ENCODE measurements at regions of chr12 and their contacts with region 1.

Region 1: DNA sequence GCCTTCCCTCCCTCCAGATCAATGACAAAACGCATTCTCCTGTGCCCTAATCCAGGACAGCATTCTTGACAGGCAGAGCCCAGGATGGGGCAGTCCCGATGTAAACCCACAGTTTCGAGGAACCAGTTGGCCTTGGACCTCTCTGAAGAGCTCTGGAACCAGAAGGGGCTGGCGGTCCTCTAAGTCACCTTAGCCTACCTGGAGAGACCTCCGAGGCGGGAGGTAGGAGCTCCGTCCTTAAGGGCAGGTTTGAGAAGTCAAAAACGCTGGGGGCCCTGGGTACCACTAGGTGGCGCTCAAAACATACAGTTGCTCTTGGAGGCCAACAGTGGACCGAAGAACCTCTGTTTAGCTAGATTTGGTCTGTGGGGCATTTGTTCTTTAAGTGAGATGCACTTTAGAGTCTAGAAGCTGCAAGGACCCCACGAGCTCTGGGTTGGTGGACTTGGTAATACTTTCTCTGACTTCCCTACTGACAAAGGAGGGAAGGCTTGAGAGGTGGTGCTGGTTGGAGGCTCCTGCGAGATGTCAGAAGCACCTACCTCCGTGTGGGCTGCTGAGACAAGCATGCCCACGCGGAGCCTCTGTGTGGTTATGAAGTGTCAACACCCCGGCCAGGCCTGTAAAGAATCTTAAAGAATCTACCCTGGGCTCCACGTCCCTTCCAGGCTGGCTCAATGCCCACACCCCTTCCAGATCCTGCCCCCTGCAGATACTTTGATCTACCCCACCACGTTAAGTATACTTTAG is 74.8 kb upstream of the CHST11 start:
- DNase-seq: peak; percentile 82
- H3K4me3 ChIP-seq: no peak overlapping the region
- H3K27ac ChIP-seq: no peak overlapping the region
- H3K4me1 ChIP-seq: peaks cover 0 to 7% (median 3%) of the 10 kb centered on the region in 4 donors
- H3K27me3 ChIP-seq: no peaks in the 10 kb centered on the region
- CTCF ChIP-seq: peak; percentile 88 to 97 (median 95)
- EP300 ChIP-seq: no peak
- POLR2A ChIP-seq: no peak

Region 2: GRCh38 chr12:104303538-104304151 is 78.3 kb before region 1 on chr12 and contains the start of gene EID3:
- in situ Hi-C with region 1: no loop called
- intact Hi-C with region 1: no loop called
- DNase-seq: peak; percentile 88
- H3K4me3 ChIP-seq: peak within 1 kb of the TSS in 3 of 4 donors; percentile 26 to 48 (median 32)
- H3K27ac ChIP-seq: peak within 1 kb of the TSS; percentile 74 to 82 (median 79)
- H3K4me1 ChIP-seq: peaks cover 25 to 60% (median 40%) of the 10 kb centered on the region in 4 donors
- H3K27me3 ChIP-seq: no peaks in the 10 kb centered on the region
- CTCF ChIP-seq: no peak
- EP300 ChIP-seq: no peak
- POLR2A ChIP-seq: peak; percentile 39
- total RNA-seq, gene EID3: 4.9 to 50.0 (median 14.3) TPM

Region 3: DNA sequence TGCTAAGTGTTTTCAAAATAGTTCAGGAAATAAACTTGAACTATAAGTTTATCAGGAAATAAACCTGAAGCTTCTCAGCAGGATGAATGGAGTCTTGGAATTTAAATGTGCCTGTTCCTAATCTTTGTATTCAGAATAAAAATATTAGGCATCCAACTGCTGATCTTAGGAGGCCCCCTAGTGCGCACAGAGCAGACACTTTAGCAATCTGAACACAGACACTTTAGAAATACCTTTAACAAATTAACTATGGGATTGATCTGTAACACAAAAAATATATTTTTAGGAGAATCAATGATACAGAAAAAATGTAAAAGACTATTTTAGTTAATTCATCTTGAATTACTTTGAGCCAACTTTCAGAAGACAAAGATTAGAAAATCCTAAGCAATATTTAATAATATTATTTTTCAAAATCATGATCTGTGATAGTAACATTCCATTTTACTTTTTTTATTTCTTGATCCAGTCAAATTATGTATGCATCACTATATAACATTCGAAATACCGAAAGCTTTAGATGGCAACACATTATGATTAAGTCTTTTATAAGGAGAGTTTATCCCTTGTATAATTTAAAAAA is 495.3 kb after region 1 on chr12:
- in situ Hi-C with region 1: loop called (anchors 5 to 10 kb)
- intact Hi-C with region 1: loop called (anchors 5 kb)
- DNase-seq: peak; percentile 15
- H3K4me3 ChIP-seq: no peak overlapping the region
- H3K27ac ChIP-seq: no peak overlapping the region
- H3K4me1 ChIP-seq: no peaks in the 10 kb centered on the region
- H3K27me3 ChIP-seq: no peaks in the 10 kb centered on the region
- CTCF ChIP-seq: peak in 4 of 5 experiments; percentile 42 to 67 (median 55)
- EP300 ChIP-seq: no peak
- POLR2A ChIP-seq: no peak

Region 4: DNA sequence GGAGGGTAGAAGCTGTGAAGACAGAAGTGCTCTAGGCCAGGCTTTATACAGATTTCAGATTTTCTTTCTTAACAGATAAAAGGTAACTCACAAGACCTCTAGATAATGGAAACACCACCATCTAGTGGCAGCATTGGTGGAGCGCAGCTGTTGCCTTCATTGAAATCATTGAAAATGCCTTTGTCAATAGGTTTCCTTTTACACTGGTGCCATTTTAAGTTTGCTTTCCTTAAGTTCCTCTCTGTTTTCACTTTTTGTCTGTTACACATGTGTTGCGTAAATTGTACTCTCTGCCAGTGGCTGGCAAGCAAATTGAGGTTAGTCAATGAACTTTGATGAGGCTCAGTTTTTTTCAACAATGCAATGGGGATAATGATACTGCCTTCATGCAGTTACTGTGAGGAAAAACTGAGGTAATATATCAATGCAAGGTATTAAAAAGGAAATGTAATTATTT is 671.2 kb after region 1 on chr12:
- in situ Hi-C with region 1: loop called in 3 of 4 experiments (anchors 10 to 25 kb)
- intact Hi-C with region 1: loop called (anchors 10 kb)
- DNase-seq: peak; percentile 82
- H3K4me3 ChIP-seq: no peak overlapping the region
- H3K27ac ChIP-seq: no peak overlapping the region
- H3K4me1 ChIP-seq: peaks cover 0 to 3% (median 0%) of the 10 kb centered on the region in 4 donors
- H3K27me3 ChIP-seq: no peaks in the 10 kb centered on the region
- CTCF ChIP-seq: peak; percentile 85 to 94 (median 91)
- EP300 ChIP-seq: no peak
- POLR2A ChIP-seq: no peak